ENCODE measurements at regions of chr6 and their contacts with region 1.

Region 1: GRCh38 chr6:30821862-30822782 is 62.2 kb upstream of the DDR1 start:
- DNase-seq: peak; percentile 46 to 72 (median 61)
- H3K4me3 ChIP-seq: no peak overlapping the region
- H3K27ac ChIP-seq: no peak overlapping the region
- H3K4me1 ChIP-seq: no peaks in the 10 kb centered on the region
- H3K27me3 ChIP-seq: peaks cover 0 to 5% (median 0%) of the 10 kb centered on the region in 5 experiments

Region 2: DNA sequence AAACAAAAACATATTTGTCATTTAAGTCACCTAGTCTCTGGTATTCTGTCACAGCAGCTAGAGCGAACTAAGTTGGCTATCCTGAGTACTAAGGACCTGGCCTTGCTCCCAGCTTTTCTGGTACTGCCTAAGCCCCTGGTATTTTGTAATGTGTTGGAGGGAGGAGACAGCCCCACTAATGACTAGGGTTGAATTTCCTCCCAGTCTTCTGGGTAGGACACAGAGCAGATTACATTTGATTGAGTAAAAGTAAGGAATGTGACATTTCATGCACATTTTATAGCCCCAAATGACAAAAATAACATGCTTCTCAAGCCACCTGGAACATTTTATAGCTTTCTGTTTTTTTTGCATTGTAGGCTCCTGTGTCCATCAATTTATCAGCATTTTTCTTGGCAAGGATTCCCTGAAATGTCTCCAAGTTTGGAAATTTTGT is 14.3 kb after region 1 on chr6:
- CTCF ChIA-PET with region 1: interaction called, 16 read pairs
- POLR2A ChIA-PET with region 1: no interaction called
- DNase-seq: no peak
- H3K4me3 ChIP-seq: no peak overlapping the region
- H3K27ac ChIP-seq: no peak overlapping the region
- H3K4me1 ChIP-seq: peaks cover 2 to 39% (median 14%) of the 10 kb centered on the region in 4 experiments
- H3K27me3 ChIP-seq: no peaks in the 10 kb centered on the region

Region 3: GRCh38 chr6:30877419-30878371 is 55.6 kb after region 1 on chr6:
- CTCF ChIA-PET with region 1: interaction called, 95 read pairs
- POLR2A ChIA-PET with region 1: no interaction called
- DNase-seq: peak; percentile 75 to 78 (median 76)
- H3K4me3 ChIP-seq: peak overlapping the region in 6 of 7 experiments; percentile 30 to 83 (median 52)
- H3K27ac ChIP-seq: peak overlapping the region in 1 of 2 experiments; percentile 77
- H3K4me1 ChIP-seq: peaks cover 0 to 8% (median 6%) of the 10 kb centered on the region in 4 experiments
- H3K27me3 ChIP-seq: peaks cover 0 to 10% (median 2%) of the 10 kb centered on the region in 5 experiments

Region 4: DNA sequence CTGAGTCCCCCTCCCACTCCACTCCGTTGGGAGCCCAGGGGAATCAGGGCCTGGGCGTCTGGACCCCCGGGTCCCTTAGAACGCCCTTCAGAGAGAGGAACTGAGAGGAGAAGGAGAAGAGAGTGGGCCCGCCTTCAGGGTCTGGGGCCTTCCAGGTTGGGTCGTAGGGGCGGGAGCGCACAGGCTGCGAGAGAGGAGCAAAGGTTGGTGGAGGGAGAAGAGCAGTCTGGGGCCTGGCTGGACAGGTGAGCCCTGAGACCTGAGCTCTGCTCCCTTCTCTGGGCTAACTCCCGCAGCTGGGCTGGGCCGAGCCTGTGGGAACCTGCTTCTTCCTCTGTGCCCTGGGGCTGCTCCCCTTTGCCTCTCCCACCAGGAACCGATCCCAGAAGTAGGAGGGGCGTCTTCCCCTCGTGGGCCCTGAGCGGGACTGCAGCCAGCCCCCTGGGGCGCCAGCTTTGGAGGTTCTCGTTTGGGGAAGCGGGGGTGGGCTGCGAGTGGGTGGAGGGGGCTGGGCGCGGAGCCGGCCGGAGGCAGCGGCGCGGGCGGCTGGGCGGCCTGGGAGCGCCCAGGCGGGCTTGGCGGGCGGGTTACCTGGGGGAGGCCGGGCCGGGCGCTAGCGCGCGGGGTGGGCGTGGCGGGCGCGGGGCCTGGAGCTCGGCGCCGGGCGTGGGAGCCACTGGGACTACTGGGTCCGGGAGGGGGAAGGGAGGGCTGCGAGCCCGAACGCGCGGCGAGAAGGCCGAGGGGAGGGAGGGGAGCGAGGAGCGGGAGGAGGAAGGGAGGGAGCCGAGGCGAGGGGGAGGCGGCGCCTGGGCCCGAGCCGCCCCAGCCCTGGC is 61.8 kb after region 1 on chr6 and contains the start of gene DDR1:
- CTCF ChIA-PET with region 1: interaction called, 95 read pairs
- POLR2A ChIA-PET with region 1: no interaction called
- DNase-seq: peak in 2 of 3 donors; percentile 28 to 33
- H3K4me3 ChIP-seq: peak within 1 kb of the TSS; percentile 17 to 72 (median 43)
- H3K27ac ChIP-seq: peak within 1 kb of the TSS in 1 of 2 experiments; percentile 68
- H3K4me1 ChIP-seq: peaks cover 0 to 14% (median 10%) of the 10 kb centered on the region in 4 experiments
- H3K27me3 ChIP-seq: peaks cover 0 to 35% (median 18%) of the 10 kb centered on the region in 5 experiments

Region 5: DNA sequence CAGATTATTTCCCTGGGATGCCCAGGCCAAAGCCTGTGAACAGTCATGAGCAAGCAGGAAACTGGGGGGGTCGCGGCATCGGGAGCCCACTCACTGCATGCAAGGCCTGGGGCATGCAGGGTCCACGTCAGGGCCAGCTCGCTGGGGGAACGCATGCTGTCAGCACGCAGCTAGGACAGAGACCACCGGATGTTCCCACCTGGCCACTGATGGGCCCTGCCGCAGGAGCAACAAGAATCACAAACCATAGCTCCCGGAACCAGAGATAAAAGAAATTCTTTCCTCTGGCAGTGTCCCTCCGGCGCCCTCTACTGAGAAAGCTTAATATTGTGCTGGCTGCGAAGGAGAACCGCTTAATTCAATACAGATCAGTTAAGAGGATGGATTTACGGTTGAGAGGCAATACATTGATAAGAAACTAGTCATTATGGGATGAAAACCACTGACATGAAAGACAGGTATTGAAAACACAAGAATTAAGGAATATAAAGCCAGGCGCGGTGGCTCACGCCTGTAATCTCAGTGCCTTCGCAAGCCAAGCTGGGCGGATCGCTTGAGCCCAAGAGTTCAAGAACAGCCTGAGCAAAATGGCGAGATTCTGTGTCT is 257.6 kb after region 1 on chr6:
- CTCF ChIA-PET with region 1: interaction called, 15 read pairs
- POLR2A ChIA-PET with region 1: no interaction called
- DNase-seq: peak; percentile 61 to 78 (median 78)
- H3K4me3 ChIP-seq: peak overlapping the region in 4 of 7 experiments; percentile 42 to 78 (median 65)
- H3K27ac ChIP-seq: no peak overlapping the region
- H3K4me1 ChIP-seq: peaks cover 0 to 5% (median 4%) of the 10 kb centered on the region in 4 experiments
- H3K27me3 ChIP-seq: no peaks in the 10 kb centered on the region